ENCODE measurements at regions of chr19 and their contacts with region 1.

Region 1: DNA sequence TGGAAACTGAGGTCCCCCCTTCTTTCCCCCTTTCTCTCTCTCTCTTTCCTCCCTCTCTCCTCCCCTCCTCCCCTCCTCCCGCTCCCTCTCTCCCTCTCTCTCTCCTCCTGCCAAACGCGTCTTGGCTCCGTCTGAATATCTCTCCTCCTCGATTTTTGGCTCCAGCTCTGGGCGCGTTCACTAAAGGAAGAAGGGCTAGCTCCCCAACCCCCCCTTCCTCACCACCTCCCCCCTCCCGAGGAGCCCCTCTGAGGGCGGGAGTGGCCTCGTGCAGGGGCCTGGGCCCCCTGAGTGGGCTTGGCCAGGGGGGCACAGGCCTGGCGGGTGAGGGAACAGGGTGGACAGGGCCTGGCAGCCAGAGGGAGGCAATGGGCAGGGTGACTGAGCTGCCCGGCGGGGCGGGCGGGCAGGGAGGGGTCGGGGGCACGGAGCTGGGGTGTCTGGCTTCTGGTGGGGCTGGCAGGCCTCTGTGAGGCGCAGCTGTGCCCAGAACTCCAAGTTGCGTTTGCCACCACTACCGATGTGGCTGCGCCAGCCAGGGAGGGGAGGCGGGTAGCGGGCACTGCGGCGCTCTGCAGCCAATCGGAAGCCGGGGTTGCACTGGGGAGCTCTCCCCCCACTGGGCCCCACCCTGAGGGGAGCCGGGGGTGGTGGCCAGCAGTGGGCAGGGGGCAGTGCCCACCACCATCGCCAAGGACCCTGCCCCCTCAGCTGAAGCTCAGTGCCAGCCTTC is 7.1 kb downstream of the NFIX start:
- DNase-seq: peak; percentile 69 to 92
- ATAC-seq: peak; percentile 57 to 63
- H3K4me3 ChIP-seq: peak overlapping the region; percentile 55 to 66 (median 61)
- H3K27ac ChIP-seq: peak overlapping the region; percentile 97 to 100 (median 99)
- H3K4me1 ChIP-seq: peaks cover 86 to 92% of the 10 kb centered on the region in 2 donors
- H3K27me3 ChIP-seq: no peaks in the 10 kb centered on the region
- CTCF ChIP-seq: peak in 3 of 5 experiments; percentile 15 to 49 (median 28)
- POLR2A ChIP-seq: peak; percentile 54 to 65

Region 2: GRCh38 chr19:13033819-13034611 is 31.7 kb after region 1 on chr19:
- in situ Hi-C with region 1: no loop called
- intact Hi-C with region 1: loop called (anchors 2 kb)
- DNase-seq: peak; percentile 74 to 90
- ATAC-seq: peak; percentile 39 to 49
- H3K4me3 ChIP-seq: no peak overlapping the region
- H3K27ac ChIP-seq: peak overlapping the region; percentile 97 to 100 (median 99)
- H3K4me1 ChIP-seq: peaks cover 99% of the 10 kb centered on the region in 2 donors
- H3K27me3 ChIP-seq: no peaks in the 10 kb centered on the region
- CTCF ChIP-seq: peak; percentile 83 to 92 (median 87)
- POLR2A ChIP-seq: no peak

Region 3: DNA sequence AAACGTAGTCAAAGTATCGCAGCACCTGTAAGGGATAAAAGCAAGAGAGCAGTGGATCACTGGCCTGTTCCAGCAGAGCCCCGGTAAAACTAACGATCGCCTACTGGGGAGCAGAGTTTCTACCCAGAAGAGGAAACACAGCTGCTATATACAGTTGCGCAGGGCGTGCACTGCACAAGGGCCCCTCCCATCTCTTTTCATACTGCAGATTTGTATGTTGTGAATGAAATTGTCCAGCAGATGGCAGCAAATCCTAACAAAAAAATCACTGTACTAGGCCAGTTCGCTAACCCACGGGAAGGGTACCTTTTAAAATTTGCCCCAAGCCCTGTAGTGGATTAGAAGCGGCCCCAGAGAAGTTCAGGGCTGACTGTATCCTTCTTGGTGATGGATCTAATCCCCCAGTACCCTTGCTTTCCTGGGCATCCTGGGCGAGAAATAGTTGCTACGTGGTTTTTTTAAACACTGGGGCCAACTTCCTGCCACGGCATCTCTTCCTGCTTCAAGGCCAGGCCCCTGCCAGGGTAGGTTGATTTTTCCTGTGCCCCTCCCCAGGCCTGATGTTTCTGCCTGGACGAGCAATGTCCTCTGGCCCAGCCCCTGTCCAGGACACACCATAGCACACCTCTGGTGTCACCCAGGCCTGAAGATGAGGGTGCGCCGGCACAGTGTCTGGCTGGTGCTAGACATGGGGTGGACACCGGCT is 274.9 kb after region 1 on chr19:
- in situ Hi-C with region 1: no loop called
- intact Hi-C with region 1: no loop called
- DNase-seq: peak in 1 of 2 donors; percentile 15
- ATAC-seq: peak; percentile 89 to 91
- H3K4me3 ChIP-seq: no peak overlapping the region
- H3K27ac ChIP-seq: no peak overlapping the region
- H3K4me1 ChIP-seq: no peaks in the 10 kb centered on the region
- H3K27me3 ChIP-seq: no peaks in the 10 kb centered on the region
- CTCF ChIP-seq: peak; percentile 56 to 75 (median 65)
- POLR2A ChIP-seq: no peak